ENCODE measurements at regions of chrX and their contacts with region 1.

Region 1: GRCh38 chrX:121195719-121196118 is 148.3 kb downstream of the GLUD2 start:
- DNase-seq: no peak
- H3K4me3 ChIP-seq: no peak overlapping the region
- CTCF ChIP-seq: no peak

Region 2: GRCh38 chrX:121151293-121151692 is 44.4 kb before region 1 on chrX:
- in situ Hi-C with region 1: no loop called
- DNase-seq: no peak
- H3K4me3 ChIP-seq: no peak overlapping the region
- CTCF ChIP-seq: no peak

Region 3: DNA sequence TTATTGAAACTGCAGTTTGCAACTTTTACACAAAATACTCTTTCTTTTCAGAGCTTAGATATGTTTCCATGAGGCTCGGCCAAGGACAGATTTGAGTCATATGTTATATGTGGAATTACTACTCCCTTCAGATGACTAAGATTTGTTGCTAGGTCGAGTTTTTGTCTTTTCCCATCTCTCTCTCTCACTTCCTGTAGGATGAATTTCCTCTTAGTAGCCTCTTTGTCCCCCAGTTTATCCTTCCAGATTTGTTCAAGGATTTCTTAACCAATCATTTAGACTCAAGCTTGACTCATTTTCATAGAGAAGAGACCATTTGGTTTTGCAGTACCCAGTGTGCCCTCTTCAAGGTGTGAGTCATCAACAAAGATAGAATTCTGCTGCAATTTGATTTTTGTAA is 60.9 kb after region 1 on chrX:
- in situ Hi-C with region 1: loop called (anchors 5 kb)
- DNase-seq: no peak
- H3K4me3 ChIP-seq: no peak overlapping the region
- CTCF ChIP-seq: no peak

Measured in astrocyte of the cerebellum (primary cell).